CD4-positive, alpha-beta memory T cell (primary cell): ENCODE measurements at regions of chr14 and their contacts with region 1.

Region 1: DNA sequence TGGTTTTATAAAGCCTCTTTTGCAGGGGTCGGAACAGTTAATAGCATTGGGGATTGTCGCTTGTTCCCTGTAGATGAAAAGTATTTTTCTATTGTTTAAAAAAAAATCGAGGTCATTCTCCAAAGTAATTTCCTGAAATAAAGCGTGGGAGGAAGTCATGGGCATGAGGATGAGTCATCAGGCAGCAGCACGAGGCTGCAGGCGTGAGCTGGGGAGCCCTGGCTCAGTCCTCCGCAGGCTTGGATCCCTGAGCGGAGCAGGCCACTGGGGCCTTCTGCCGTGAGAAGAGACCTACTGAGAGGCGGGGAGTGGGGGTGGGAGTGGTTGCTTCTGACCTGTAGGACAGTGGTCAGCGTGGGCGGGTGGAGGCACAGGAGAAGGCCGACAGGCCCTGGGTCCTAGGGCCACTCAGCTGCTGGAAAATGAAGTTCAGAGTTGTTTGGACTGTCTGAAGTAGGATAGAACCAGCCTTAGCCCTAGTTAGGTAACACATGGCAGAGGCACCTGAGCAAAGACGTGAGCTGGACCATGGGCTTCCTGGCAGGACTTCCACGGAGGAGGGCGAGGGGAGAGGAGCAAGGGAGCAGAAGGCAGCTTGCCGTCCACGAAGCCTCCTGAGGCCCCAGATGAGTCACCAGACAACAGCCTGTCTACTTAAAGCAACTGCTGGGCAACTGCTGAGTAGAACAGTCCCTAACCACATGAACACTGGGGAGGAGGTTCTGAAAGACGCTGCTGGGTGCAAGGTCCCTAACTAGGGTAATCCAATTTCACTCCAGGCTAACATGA is 21.1 kb upstream of the LGALS3 start:
- DNase-seq: peak; percentile 19 to 68 (median 27)
- H3K4me3 ChIP-seq: no peak overlapping the region
- H3K4me3 Mint-ChIP-seq: peak overlapping the region; percentile 1 to 71 (median 34)
- H3K27ac ChIP-seq: peak overlapping the region; percentile 33
- H3K27ac Mint-ChIP-seq: peak overlapping the region; percentile 86 to 95 (median 92)
- H3K4me1 ChIP-seq: peaks cover 38% of the 10 kb centered on the region
- H3K4me1 Mint-ChIP-seq: peaks cover 23 to 50% (median 32%) of the 10 kb centered on the region in 4 donors
- H3K27me3 ChIP-seq: no peaks in the 10 kb centered on the region
- H3K27me3 Mint-ChIP-seq: no peaks in the 10 kb centered on the region

Region 2: DNA sequence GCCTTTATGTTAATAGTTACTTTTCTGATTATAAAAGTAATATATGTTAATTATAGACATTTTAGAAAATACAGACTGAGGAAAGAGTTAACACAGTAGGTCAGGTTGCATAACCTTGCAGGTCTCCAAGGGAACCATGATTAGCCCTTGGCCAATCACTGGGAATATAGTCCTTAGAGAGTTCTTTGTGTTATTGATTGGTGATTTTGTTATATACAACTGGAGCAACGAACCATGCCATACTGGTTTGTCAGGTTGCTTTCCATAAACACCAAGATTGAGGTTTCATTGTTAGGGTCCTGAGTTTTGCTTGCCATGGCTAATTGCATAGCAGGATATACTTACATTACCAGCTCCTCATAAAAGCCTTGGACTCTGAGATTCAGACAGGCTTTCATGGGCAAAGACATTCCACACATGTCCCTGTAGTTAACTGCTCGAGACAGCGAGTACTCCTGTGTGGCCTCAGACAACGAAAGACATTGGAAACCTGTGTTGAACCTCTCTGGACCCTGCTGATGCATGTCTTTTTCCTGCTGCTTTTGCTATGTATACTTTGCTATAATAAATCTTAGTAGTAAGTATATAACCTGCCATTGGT is 22.8 kb before region 1 on chr14:
- CTCF ChIA-PET with region 1: interaction called, 32 read pairs
- POLR2A ChIA-PET with region 1: interaction called, 9 read pairs
- intact Hi-C with region 1: no loop called
- DNase-seq: no peak
- H3K4me3 ChIP-seq: no peak overlapping the region
- H3K4me3 Mint-ChIP-seq: no peak overlapping the region
- H3K27ac ChIP-seq: no peak overlapping the region
- H3K27ac Mint-ChIP-seq: no peak overlapping the region
- H3K4me1 ChIP-seq: peaks cover 3% of the 10 kb centered on the region
- H3K4me1 Mint-ChIP-seq: peaks cover 3% of the 10 kb centered on the region in 4 donors
- H3K27me3 ChIP-seq: no peaks in the 10 kb centered on the region
- H3K27me3 Mint-ChIP-seq: no peaks in the 10 kb centered on the region